Activated T-helper 1 cell treated with anti-CD3 and anti-CD28 coated beads, Interleukin-12 subunit alpha, Interleukin-12 subunit beta, Interleukin-2, Interleukin-4 antibody, amounts not matched to agents 30 ng/mL and 10 ng/mL and 1 ng/mL, durations not matched to agents 14 hours and 24 hours and 36 hours (primary cell): ENCODE measurements at regions of chr13 and their contacts with region 1.

Region 1: DNA sequence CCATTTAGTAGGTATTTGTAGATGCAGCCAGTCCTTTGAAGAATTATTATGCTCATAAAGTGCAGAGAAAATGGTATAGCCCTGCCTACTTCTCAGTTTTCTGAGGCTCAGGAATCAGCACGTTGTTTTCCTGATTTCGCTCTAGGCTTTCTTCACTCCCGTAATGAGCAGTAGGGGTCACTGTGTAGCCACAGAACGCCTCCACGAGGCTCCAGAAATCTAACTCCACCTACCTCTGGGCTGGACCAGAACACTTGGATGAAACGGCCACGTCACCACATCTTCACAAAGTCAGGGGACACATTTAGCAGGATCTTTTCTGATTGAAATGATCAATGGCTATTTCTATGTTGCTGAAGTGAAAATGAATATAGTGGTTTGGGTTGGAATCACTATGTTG is 49.8 kb upstream of the GTF3A start:
- DNase-seq: peak; percentile 38
- H3K4me3 Mint-ChIP-seq: no peak overlapping the region
- H3K27ac Mint-ChIP-seq: no peak overlapping the region
- H3K4me1 Mint-ChIP-seq: peaks cover 26% of the 10 kb centered on the region
- H3K27me3 Mint-ChIP-seq: peaks cover 26% of the 10 kb centered on the region

Region 2: DNA sequence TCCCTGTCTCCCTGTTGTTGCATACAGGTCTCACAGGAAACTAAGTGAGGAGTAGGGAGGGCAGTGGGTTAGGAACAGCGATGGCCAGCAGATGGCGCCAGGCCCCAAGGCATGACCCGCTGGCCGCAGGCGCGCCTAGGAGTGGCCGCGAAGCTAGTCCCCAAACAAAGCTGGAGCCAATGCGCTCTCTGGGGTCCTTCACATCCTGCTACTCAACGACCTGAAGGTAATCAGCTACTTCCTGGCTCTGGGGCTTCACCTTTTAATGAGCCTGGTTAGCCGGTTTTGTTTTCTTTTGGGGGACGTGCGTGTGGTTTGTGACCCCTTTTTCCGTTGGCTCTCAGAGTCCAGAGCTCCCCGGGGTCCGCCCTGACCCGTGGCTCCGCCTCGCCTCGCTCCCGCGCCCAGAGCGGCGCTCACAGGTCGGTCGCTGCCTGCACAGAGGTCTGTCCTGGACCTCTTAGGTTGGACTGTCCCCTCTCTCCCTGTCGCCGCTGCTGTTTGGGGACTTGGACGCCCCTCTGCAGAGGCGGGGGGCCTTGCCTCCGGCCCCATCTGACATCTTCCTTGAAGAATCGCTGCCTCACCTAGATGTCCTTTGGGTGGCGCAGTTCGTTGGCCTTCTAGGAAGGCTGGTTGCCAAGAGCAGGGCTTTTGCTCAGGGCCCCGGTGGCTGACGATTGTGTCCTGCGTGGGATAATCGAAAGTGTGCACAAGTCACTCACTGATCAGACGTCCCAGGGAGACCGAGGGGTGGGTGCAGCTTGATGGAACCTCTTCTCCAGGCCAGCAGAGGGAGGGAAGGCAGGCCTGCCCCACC is 12.4 kb before region 1 on chr13:
- intact Hi-C with region 1: loop called (anchors 1 kb)
- DNase-seq: peak; percentile 71
- H3K4me3 Mint-ChIP-seq: peak overlapping the region; percentile 49
- H3K27ac Mint-ChIP-seq: no peak overlapping the region
- H3K4me1 Mint-ChIP-seq: no peaks in the 10 kb centered on the region
- H3K27me3 Mint-ChIP-seq: peaks cover 25% of the 10 kb centered on the region

Region 3: DNA sequence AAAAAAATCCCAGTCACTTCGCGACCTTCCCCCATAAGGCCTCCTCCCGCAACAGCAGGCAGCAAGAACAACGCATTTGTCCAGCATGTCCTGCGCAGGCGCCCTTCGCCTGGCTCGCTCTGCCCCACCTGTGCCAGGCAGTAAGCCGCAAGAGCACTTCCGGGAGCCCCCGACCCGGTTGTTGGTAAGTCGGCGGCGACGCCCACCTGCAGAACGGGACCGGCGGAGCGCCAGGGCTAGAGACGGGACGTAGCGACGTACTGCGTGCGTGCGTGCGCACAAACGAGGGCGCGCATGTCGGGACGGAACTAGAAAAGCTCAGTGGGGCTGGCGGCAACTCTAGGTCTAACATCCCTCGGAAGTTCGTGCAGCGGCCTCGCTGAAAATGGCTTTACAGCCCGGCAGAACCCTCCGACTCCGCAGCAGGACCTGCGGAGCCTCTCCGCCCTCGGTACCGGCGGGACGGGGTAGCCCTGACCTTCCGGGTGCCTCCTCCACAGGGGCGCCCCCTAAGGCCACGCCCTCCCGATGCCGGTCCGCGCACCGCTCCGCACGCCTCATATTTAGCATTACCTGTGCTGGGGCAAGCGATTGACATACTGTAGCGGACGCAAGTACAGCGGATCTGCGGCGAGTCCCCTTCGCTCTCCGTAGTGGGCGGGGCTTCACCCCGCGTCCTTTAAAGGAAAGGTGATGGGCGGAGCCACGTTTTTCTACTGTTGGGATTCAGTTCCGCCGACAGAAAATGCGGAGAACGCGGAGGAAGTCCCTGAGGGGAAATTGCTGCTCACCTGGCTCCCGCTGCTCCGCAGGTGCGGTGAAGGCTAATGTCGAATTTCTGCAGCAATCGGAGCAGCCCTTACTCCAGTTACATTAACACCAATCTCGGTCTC is 75.5 kb after region 1 on chr13 and contains the start of gene MTIF3:
- intact Hi-C with region 1: loop called (anchors 1 kb)
- DNase-seq: peak; percentile 95
- H3K4me3 Mint-ChIP-seq: peak within 1 kb of the TSS; percentile 91
- H3K27ac Mint-ChIP-seq: peak within 1 kb of the TSS; percentile 93
- H3K4me1 Mint-ChIP-seq: peaks cover 58% of the 10 kb centered on the region
- H3K27me3 Mint-ChIP-seq: no peaks in the 10 kb centered on the region
- total RNA-seq, gene MTIF3: 30.4 and 36.0 TPM in 2 replicates

Region 4: GRCh38 chr13:27461940-27462584 is 87.4 kb after region 1 on chr13:
- intact Hi-C with region 1: no loop called
- DNase-seq: no peak
- H3K4me3 Mint-ChIP-seq: no peak overlapping the region
- H3K27ac Mint-ChIP-seq: no peak overlapping the region
- H3K4me1 Mint-ChIP-seq: peaks cover 6% of the 10 kb centered on the region
- H3K27me3 Mint-ChIP-seq: no peaks in the 10 kb centered on the region

Region 5: DNA sequence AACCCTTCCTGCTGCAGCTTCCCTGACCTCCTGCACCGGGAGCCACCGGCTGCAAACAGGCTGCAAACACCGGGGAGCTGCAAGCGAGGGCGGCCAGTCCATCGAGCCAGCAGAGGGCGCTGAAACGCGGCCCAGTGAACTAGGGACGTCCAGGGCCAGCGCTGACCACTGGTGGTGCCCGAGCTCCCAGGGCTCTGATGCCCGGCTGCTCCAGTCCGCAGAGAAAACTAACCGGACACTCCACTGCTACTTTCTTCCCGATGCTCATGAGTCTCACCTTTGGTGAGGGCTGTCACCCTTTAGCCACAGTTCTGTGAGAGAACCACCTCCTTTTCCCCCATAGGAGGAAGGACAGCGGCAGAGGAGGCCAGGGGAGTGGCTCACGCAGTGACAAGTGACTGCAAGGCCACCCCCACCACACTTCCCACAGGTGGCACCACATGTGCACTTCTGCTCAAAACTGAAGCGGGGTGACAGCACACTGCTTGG is 158.5 kb after region 1 on chr13:
- intact Hi-C with region 1: loop called (anchors 2 kb)
- DNase-seq: peak; percentile 6
- H3K4me3 Mint-ChIP-seq: no peak overlapping the region
- H3K27ac Mint-ChIP-seq: no peak overlapping the region
- H3K4me1 Mint-ChIP-seq: peaks cover 6% of the 10 kb centered on the region
- H3K27me3 Mint-ChIP-seq: no peaks in the 10 kb centered on the region